ENCODE measurements at regions of chr2 and their contacts with region 1.

Region 1: DNA sequence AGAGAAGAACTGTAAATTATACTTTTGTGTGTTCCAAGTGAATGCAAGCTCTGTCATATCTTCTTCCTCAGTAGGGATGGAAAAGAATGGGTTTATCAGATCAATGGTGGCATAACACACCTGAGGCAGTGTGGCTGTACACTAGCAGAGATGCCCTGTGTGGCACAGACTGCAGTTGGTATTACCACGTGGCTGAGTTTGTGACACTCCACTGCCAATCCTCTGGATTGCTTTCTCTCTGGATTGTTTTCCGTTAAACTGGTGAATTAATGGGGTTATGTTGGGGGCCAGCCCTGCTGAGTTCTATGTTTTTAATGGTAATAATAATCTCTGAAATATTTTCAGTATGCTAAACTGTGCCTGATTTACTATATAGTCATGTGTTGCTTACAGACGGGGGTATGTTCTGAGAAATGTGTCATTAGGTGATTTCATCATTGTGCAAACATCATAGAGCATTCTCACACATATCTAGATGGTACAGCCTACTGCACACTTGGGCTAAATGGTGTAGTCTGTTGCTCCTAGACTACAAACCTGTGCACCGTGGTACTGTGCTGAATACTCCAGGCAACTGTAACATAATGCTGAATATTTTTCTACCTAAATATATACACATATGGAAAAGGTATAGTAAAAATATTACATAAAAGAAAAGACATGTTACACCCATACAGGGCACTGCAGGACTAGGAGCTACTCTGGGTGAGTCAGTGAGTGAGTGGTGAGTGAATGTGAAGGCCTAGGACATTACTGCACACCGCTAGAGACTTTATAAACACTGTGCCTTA is 84.7 kb upstream of the ST6GAL2 start:
- DNase-seq: peak; percentile 83
- ATAC-seq: peak; percentile 94
- H3K4me3 ChIP-seq: peak overlapping the region; percentile 5; the same call in 1 of the 2 replicates
- H3K27ac ChIP-seq: peak overlapping the region; percentile 88
- H3K4me1 ChIP-seq: peaks cover 38% of the 10 kb centered on the region
- H3K27me3 ChIP-seq: no peaks in the 10 kb centered on the region
- CTCF ChIP-seq: no peak

Region 2: GRCh38 chr2:106996171-106996769 is 25.6 kb after region 1 on chr2:
- CTCF ChIA-PET with region 1: no interaction called
- POLR2A ChIA-PET with region 1: no interaction called
- intact Hi-C with region 1: loop called (anchors 2 kb)
- DNase-seq: peak; percentile 44
- ATAC-seq: peak; percentile 1; the same call in 1 of the 2 replicates
- H3K4me3 ChIP-seq: no peak overlapping the region
- H3K27ac ChIP-seq: peak overlapping the region; percentile 91
- H3K4me1 ChIP-seq: peaks cover 61% of the 10 kb centered on the region
- H3K27me3 ChIP-seq: no peaks in the 10 kb centered on the region
- CTCF ChIP-seq: no peak

Measured in PC-3 (cell line).